GM10248 (cell line): ENCODE measurements at regions of chr9 and their contacts with region 1.

Region 1: GRCh38 chr9:131590908-131591844 is 45.9 kb downstream of the PRRT1B start:
- DNase-seq: peak; percentile 85
- CTCF ChIP-seq: peak; percentile 84

Region 2: DNA sequence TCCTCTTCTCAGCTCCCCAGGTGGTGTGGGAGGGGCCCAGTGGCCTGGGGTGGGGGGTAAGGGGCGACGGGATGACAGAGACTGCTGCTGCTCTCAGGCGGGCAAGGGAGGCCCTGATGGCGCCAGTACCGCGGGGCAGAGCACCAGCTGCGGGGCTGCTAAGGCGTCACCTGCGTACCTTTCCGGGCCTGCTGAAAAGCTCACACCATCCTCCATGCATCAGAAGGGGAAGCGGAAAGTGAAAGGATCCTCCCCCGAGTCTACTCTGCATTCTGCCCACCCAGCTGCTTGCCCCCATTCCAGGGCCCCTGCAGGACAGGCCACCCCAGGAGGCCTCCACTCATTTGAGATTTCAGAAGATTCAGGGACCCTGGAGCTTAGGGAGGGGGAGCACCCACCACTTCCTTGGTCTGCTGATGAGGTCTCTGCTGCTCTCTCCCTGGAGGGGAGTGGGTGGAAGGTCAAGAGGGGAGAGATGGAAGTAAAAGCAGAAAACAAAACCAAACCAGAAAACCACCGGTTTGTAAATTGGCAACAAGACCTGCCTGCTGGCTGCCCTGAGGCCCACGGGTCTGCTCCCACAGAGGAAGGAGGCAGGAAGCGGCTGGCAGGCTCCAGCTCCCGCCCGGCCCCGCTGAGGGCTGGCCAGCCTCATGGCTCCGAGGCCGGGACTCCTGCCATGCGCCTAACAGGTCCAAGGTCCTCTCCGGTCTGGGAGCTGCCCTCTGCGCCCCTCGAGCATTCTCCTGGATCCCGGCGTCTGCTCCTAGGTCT is 12.3 kb before region 1 on chr9:
- CTCF ChIA-PET with region 1: interaction called, 14 read pairs
- POLR2A ChIA-PET with region 1: no interaction called
- DNase-seq: peak; percentile 81
- CTCF ChIP-seq: no peak

Region 3: DNA sequence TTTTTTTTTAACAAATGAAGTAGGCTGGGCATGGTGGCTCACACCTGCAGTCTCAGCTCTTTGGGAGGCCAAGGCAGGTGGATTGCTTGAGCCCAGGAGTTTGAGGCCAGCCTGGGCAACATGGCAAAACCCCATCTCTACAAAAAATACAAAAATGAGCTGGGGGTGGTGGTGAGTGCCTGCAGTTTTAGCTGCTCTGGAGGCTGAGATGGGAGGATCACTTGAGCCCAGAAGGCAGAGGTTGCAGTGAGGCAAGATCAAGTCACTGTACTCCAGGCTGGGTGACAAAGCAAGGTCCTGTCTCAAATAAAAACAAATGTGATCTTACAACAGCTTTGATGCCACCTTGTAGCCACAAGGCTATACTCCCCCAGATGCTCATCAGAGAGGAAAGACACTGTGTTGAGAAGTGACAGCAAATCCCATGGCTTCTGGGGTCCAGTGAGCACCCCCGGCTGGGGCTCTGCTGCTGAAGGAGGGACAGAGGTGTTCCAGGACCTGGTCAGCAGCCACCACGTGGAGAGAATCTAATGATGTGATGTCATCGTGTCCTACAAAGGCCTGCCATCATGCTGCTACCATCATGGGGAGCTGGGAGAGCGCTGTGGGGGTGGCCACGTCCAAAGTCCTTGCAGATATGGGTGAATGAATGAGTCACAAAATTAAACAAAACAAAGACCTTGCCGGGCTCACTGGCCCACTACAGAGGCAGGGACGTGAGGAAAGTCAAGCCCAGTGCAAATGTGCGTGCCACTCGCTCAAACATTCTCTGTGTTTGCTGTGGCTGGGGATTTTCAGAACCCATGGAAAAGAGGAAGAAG is 14.8 kb after region 1 on chr9:
- CTCF ChIA-PET with region 1: interaction called, 43 read pairs
- POLR2A ChIA-PET with region 1: no interaction called
- DNase-seq: no peak
- CTCF ChIP-seq: no peak

Region 4: GRCh38 chr9:131627648-131628458 is 36.7 kb after region 1 on chr9:
- CTCF ChIA-PET with region 1: interaction called, 10 read pairs
- POLR2A ChIA-PET with region 1: no interaction called
- DNase-seq: no peak
- CTCF ChIP-seq: no peak

Region 5: GRCh38 chr9:131733541-131734061 is 142.4 kb after region 1 on chr9:
- CTCF ChIA-PET with region 1: interaction called, 96 read pairs
- POLR2A ChIA-PET with region 1: interaction called, 3 read pairs
- DNase-seq: no peak
- CTCF ChIP-seq: no peak

Region 6: GRCh38 chr9:131739980-131740648 is 148.9 kb after region 1 on chr9 and contains the start of gene RAPGEF1:
- CTCF ChIA-PET with region 1: interaction called, 96 read pairs
- POLR2A ChIA-PET with region 1: interaction called, 3 read pairs
- DNase-seq: peak; percentile 85
- CTCF ChIP-seq: peak; percentile 100

Region 7: GRCh38 chr9:132042324-132042723 is 451.1 kb after region 1 on chr9:
- CTCF ChIA-PET with region 1: no interaction called
- POLR2A ChIA-PET with region 1: no interaction called
- DNase-seq: no peak
- CTCF ChIP-seq: no peak

Region 8: DNA sequence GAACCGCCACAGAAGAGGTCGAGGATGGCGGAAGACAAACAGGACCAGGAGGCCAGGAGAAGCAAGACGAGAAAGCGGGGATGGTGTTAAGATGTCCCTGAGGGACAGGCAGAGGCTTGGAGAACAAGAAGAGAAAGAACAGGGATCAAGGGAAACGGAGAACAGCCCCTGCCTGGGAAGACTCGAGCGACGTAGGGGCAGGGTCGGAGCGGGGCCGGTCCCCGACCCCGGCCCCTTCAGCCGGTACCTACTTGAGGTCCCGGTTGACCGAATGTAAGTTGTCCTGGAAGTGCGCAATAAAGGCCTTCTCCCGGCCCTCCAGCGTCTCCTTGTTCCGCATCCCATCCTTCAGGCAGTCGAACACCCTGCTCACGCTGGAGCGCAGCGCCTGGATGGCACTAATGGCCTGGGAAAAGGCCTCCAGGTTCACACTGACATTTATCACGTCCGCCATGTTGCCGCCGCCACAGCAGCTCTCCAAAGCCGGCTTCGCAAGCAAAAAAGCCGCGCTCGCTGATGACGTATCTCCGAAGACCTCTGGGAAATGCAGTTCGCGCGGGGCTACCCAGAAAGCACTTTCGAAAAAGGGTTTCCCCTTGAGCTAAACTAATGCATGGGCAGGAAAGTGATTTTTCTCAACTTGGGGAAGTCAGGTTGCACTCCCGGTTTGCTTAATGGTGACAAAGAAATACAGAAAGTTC is 488.4 kb after region 1 on chr9 and contains the start of gene MED27:
- CTCF ChIA-PET with region 1: no interaction called
- POLR2A ChIA-PET with region 1: no interaction called
- DNase-seq: peak; percentile 95
- CTCF ChIP-seq: no peak